ENCODE measurements at regions of chr11 and their contacts with region 1.

Region 1: DNA sequence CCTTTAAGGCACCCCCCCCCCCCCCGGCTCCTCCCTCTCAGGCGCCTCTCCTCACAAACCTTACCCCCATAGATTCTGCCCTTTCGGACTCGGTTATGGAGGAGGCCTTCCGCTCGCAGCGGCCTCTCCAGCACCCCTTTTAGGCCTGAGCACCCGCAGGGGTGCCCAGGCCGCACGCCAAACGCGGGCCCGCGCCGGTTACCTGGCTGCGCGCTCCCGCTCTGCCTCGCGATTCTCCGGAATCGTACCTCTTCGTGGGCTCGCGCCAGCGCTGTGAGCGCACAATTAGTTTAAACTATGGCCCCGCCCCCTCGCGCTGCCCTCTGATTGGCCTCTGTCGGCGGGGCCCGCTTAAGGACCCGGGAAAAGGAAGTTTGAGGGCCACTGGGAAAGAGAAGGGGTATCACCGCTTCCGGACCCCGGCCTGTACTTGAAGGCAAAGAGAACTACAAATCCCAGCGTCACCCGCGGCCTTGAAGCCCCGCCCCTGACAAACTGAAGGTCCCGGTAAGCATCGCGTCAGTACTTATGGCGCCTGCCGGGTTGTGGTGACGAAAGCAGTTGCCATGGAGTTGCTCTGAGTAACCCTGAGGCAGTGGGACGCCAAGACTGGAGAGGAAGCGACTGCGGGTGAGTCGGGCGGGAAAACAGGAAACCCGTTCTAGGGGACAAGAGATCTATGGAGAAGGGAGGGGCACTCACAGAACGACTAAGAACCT is at the starts of genes LRRC51 and NUMA1:
- DNase-seq: peak; percentile 100
- ATAC-seq: peak; percentile 95
- H3K4me3 ChIP-seq: peak within 1 kb of the TSS; percentile 57
- H3K27ac ChIP-seq: peak within 1 kb of the TSS; percentile 74
- H3K4me1 ChIP-seq: peaks cover 2% of the 10 kb centered on the region; the same call in 1 of the 2 replicates
- H3K27me3 ChIP-seq: no peaks in the 10 kb centered on the region
- CTCF ChIP-seq: no peak
- POLR2A ChIP-seq: peak; percentile 65
- RAD21 ChIP-seq: no peak
- total RNA-seq, gene LRRC51: 4.4 and 5.6 TPM in 2 replicates
- total RNA-seq, gene NUMA1: 56.7 and 61.7 TPM in 2 replicates

Region 2: GRCh38 chr11:72040726-72041441 is 39.5 kb before region 1 on chr11:
- CTCF ChIA-PET with region 1: interaction called, 3 read pairs
- POLR2A ChIA-PET with region 1: interaction called, 3 read pairs
- dilution Hi-C with region 1: no loop called
- in situ Hi-C with region 1: loop called (anchors 5 kb)
- intact Hi-C with region 1: loop called (anchors 1 kb)
- DNase-seq: peak; percentile 95
- ATAC-seq: peak; percentile 67
- H3K4me3 ChIP-seq: peak overlapping the region; percentile 76
- H3K27ac ChIP-seq: peak overlapping the region; percentile 95
- H3K4me1 ChIP-seq: peaks cover 10% of the 10 kb centered on the region
- H3K27me3 ChIP-seq: no peaks in the 10 kb centered on the region
- CTCF ChIP-seq: no peak
- POLR2A ChIP-seq: peak; percentile 67; the same call in 1 of the 2 replicates
- RAD21 ChIP-seq: peak; percentile 15; the same call in 1 of the 2 replicates

Region 3: GRCh38 chr11:72141066-72141465 is 60.7 kb after region 1 on chr11:
- CTCF ChIA-PET with region 1: no interaction called
- POLR2A ChIA-PET with region 1: no interaction called
- dilution Hi-C with region 1: no loop called
- in situ Hi-C with region 1: no loop called
- intact Hi-C with region 1: loop called (anchors 2 kb)
- DNase-seq: peak; percentile 90
- ATAC-seq: peak; percentile 52
- H3K4me3 ChIP-seq: no peak overlapping the region
- H3K27ac ChIP-seq: peak overlapping the region; percentile 68
- H3K4me1 ChIP-seq: peaks cover 15% of the 10 kb centered on the region
- H3K27me3 ChIP-seq: no peaks in the 10 kb centered on the region
- CTCF ChIP-seq: no peak
- POLR2A ChIP-seq: no peak
- RAD21 ChIP-seq: no peak

Measured in IMR-90 (cell line).